B cell (primary cell): ENCODE measurements at regions of chr3 and their contacts with region 1.

Region 1: DNA sequence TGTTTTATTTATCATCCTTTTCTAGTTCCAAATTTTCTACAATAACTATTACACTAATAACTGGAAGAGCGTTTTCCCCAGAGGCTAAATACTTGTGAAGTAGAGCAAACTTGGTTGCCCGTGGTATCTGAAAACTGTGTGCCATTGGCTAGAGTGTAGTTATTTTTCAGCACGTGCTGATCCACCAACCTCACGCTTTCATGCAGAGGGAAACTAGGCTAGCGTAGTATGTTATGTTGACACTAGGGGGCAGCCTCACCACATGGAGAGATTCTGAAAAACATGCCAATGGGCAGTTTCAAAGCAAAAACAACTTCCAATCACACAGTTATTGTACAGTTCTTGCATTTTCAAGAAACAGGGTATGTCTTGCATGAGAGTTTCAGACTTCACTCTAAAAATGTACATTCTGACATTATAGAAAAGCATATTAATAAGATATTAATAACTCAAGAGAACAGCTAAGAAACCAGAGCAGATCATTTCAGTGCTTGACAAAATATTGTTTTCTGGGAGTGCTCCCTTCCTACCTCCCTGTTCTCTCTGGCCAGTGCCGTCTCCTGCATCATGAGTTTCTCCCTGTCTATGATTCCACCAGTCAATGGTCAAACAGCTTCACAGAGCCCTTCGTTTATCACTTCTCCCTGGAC is 39.7 kb downstream of the SPATA12 start:
- DNase-seq: peak; percentile 72
- ATAC-seq: peak; percentile 81
- H3K4me3 ChIP-seq: no peak overlapping the region
- H3K4me3 Mint-ChIP-seq: no peak overlapping the region
- H3K27ac ChIP-seq: no peak overlapping the region
- H3K27ac Mint-ChIP-seq: no peak overlapping the region
- H3K4me1 ChIP-seq: peaks cover 0 to 2% of the 10 kb centered on the region in 2 donors
- H3K4me1 Mint-ChIP-seq: no peaks in the 10 kb centered on the region
- H3K27me3 ChIP-seq: peaks cover 0 to 4% (median 0%) of the 10 kb centered on the region in 4 experiments
- H3K27me3 Mint-ChIP-seq: peaks cover 10% of the 10 kb centered on the region
- CTCF ChIP-seq: peak; percentile 97

Region 2: DNA sequence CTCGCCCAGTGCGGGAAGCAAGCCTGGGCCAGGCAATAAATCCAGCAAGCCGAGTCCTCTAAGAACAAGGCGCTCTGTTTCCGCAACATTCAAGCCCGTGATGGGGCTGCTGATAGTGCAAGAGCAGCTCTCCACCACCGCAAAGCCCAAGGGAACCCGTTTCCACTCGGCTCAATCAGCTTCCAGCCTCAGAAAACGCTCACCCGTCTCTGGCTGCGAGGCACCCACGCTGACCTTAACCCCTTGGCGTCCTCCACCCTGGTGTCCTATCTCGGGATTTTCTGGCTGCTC is 21.9 kb before region 1 on chr3:
- CTCF ChIA-PET with region 1: interaction called, 16 read pairs
- POLR2A ChIA-PET with region 1: no interaction called
- intact Hi-C with region 1: no loop called
- DNase-seq: peak; percentile 80
- ATAC-seq: peak; percentile 83
- H3K4me3 ChIP-seq: peak overlapping the region in 4 of 5 experiments; percentile 54 to 70 (median 62)
- H3K4me3 Mint-ChIP-seq: peak overlapping the region; percentile 86
- H3K27ac ChIP-seq: no peak overlapping the region
- H3K27ac Mint-ChIP-seq: peak overlapping the region; percentile 71
- H3K4me1 ChIP-seq: peaks cover 21 to 22% of the 10 kb centered on the region in 2 donors
- H3K4me1 Mint-ChIP-seq: peaks cover 20% of the 10 kb centered on the region
- H3K27me3 ChIP-seq: peaks cover 0 to 72% (median 54%) of the 10 kb centered on the region in 4 experiments
- H3K27me3 Mint-ChIP-seq: peaks cover 66% of the 10 kb centered on the region
- CTCF ChIP-seq: no peak

Region 3: DNA sequence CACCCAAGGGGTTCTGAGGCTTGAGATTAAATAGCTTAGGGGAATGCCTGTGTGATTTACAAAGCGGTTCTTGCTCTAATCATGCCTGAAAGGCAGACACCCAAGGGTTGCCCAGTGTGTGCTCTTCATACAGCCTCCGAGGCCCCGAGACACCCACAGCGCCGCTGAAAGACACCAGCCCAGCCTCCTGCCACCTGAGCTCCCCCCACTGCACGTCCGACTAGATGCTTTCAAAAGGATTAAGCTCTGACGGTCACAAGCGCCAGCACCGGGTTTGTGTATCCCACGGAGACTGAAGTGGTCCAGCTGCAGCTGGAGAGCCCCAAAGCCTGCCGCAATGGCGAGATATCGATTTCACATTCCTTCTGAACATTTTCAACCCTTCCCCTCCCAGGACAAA is 10.6 kb after region 1 on chr3:
- CTCF ChIA-PET with region 1: interaction called, 11 read pairs
- POLR2A ChIA-PET with region 1: no interaction called
- intact Hi-C with region 1: no loop called
- DNase-seq: no peak
- ATAC-seq: no peak
- H3K4me3 ChIP-seq: no peak overlapping the region
- H3K4me3 Mint-ChIP-seq: no peak overlapping the region
- H3K27ac ChIP-seq: no peak overlapping the region
- H3K27ac Mint-ChIP-seq: no peak overlapping the region
- H3K4me1 ChIP-seq: no peaks in the 10 kb centered on the region
- H3K4me1 Mint-ChIP-seq: peaks cover 2% of the 10 kb centered on the region
- H3K27me3 ChIP-seq: peaks cover 0 to 7% (median 0%) of the 10 kb centered on the region in 4 experiments
- H3K27me3 Mint-ChIP-seq: peaks cover 30% of the 10 kb centered on the region
- CTCF ChIP-seq: no peak

Region 4: GRCh38 chr3:57434041-57434440 is 333.9 kb after region 1 on chr3:
- CTCF ChIA-PET with region 1: no interaction called
- POLR2A ChIA-PET with region 1: no interaction called
- intact Hi-C with region 1: loop called (anchors 10 kb)
- DNase-seq: peak; percentile 8
- ATAC-seq: no peak
- H3K4me3 ChIP-seq: no peak overlapping the region
- H3K4me3 Mint-ChIP-seq: no peak overlapping the region
- H3K27ac ChIP-seq: no peak overlapping the region
- H3K27ac Mint-ChIP-seq: no peak overlapping the region
- H3K4me1 ChIP-seq: no peaks in the 10 kb centered on the region
- H3K4me1 Mint-ChIP-seq: no peaks in the 10 kb centered on the region
- H3K27me3 ChIP-seq: no peaks in the 10 kb centered on the region
- H3K27me3 Mint-ChIP-seq: peaks cover 19% of the 10 kb centered on the region
- CTCF ChIP-seq: peak; percentile 23